Activated B cell treated with CpG ODN at 0.5 μM for 24 hours (primary cell): ENCODE measurements at regions of chr11 and their contacts with region 1.

Region 1: DNA sequence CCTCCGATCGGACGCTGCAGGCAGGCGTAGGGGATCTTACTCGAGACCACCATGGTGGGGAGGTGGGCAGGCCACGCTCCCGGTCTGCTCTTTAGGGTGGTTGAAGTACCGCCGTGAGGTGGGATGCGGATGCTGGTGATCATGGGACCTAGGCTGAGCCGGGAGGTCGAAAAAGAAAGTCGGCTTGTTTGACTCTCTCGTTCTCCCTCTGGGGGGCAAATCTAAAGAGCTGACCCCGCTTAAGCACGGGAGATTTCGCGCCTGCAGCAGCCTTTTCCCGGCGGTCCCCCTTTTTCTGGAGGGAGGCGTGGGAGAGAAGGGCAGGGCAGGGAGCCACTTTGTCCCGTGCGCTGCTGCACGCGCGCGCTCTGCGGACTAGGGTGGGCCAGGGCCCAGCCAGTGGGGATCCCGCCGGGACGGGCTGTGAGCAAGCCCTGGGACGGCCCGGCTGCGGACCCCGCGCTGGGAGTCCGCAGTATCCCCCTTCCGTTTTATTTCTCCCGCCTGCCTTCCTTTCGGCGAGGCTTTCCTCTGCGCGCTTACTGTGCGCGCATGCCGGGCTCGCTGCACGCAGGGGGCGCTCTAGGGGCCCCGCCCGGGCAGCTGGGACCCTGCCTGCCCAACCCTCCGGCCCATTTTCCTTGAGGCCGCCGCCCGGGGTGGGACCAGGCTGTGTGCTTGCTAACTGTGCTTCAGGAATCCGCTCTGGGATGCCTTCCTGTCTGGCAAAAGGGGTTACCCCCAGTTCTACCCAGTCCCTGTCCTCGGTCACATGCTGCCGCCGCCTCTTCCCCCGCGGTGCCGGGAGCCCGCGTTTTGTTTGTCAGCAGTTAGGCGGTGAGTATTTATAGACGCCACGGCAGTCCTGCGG is 81.0 kb downstream of the PRR5L start:
- DNase-seq: peak; percentile 44
- ATAC-seq: peak; percentile 66
- H3K4me3 Mint-ChIP-seq: peak overlapping the region; percentile 88
- H3K27ac Mint-ChIP-seq: no peak overlapping the region
- H3K4me1 Mint-ChIP-seq: peaks cover 31% of the 10 kb centered on the region
- H3K27me3 Mint-ChIP-seq: peaks cover 34% of the 10 kb centered on the region
- CTCF ChIP-seq: no peak

Region 2: GRCh38 chr11:36326524-36327419 is 50.4 kb before region 1 on chr11:
- CTCF ChIA-PET with region 1: no interaction called
- POLR2A ChIA-PET with region 1: no interaction called
- intact Hi-C with region 1: loop called (anchors 1 kb)
- DNase-seq: no peak
- ATAC-seq: peak; percentile 65
- H3K4me3 Mint-ChIP-seq: peak overlapping the region; percentile 79
- H3K27ac Mint-ChIP-seq: peak overlapping the region; percentile 60
- H3K4me1 Mint-ChIP-seq: peaks cover 15% of the 10 kb centered on the region
- H3K27me3 Mint-ChIP-seq: no peaks in the 10 kb centered on the region
- CTCF ChIP-seq: no peak

Region 3: GRCh38 chr11:36354221-36355003 is 22.7 kb before region 1 on chr11:
- CTCF ChIA-PET with region 1: no interaction called
- POLR2A ChIA-PET with region 1: no interaction called
- intact Hi-C with region 1: loop called (anchors 1 kb)
- DNase-seq: no peak
- ATAC-seq: peak; percentile 38
- H3K4me3 Mint-ChIP-seq: peak overlapping the region; percentile 17
- H3K27ac Mint-ChIP-seq: no peak overlapping the region
- H3K4me1 Mint-ChIP-seq: peaks cover 45% of the 10 kb centered on the region
- H3K27me3 Mint-ChIP-seq: no peaks in the 10 kb centered on the region
- CTCF ChIP-seq: no peak

Region 4: GRCh38 chr11:36478700-36479329 is 101.7 kb after region 1 on chr11:
- CTCF ChIA-PET with region 1: interaction called, 3 read pairs
- POLR2A ChIA-PET with region 1: no interaction called
- intact Hi-C with region 1: loop called (anchors 5 kb)
- DNase-seq: no peak
- ATAC-seq: no peak
- H3K4me3 Mint-ChIP-seq: no peak overlapping the region
- H3K27ac Mint-ChIP-seq: no peak overlapping the region
- H3K4me1 Mint-ChIP-seq: no peaks in the 10 kb centered on the region
- H3K27me3 Mint-ChIP-seq: no peaks in the 10 kb centered on the region
- CTCF ChIP-seq: no peak